ENCODE measurements at regions of chr6 and their contacts with region 1.

Region 1: GRCh38 chr6:32885698-32886286 is 31.8 kb downstream of the PSMB9 start:
- DNase-seq: peak in 1 of 2 donors; percentile 87
- ATAC-seq: peak; percentile 70 to 85 (median 71)
- H3K4me3 ChIP-seq: no peak overlapping the region
- H3K4me3 Mint-ChIP-seq: no peak overlapping the region
- H3K27ac ChIP-seq: no peak overlapping the region
- H3K27ac Mint-ChIP-seq: no peak overlapping the region
- H3K4me1 ChIP-seq: no peaks in the 10 kb centered on the region
- H3K4me1 Mint-ChIP-seq: peaks cover 0 to 5% of the 10 kb centered on the region in 2 donors
- H3K27me3 ChIP-seq: no peaks in the 10 kb centered on the region
- H3K27me3 Mint-ChIP-seq: no peaks in the 10 kb centered on the region
- CTCF ChIP-seq: peak; percentile 73

Region 2: DNA sequence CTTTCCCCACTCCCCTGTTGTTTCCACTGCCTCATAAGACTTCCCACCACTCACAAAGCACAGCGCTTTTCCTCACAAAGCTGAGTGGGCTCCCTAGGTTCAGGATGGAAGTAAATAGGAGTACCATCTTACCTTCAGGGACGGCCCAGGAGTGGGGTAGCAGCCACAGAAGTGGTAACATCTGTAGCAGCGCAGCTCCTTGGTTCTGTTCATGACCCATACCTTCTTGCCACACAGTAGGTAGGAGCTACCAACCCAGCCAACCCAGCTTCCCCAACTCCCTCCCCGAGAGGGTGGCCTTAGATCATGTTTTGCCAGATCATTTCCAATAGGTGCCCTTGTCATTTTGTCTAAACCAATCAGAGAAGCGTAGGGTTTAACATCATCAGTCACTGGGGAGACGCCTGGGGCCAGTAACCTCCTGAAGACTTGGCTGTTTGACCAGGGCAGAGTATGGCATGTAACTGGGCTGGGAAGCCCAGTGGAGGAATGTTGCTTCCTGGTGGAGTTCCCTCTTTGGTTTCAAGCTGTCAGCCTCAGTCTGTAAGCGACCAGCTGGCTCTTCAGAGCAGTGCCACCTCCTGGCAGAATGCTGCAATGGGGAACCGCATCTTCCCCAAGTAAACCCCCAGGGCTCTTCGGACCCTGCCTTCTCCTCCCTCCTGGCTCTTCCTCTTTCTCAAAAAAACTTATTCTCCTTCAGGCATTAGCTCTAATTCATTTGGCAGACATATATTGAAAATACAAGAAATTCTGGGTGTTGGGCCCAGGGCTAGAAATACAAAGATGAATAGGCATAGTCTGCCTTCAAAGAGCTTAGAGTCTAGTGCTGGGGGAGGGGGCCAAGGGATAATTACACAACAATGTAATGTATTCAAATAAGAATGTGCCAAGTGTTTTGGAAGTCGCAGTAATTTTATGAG is 67.3 kb after region 1 on chr6 and contains the start of gene HLA-DMA:
- intact Hi-C with region 1: loop called (anchors 2 kb)
- DNase-seq: peak; percentile 67 to 91
- ATAC-seq: peak; percentile 97 to 99 (median 97)
- H3K4me3 ChIP-seq: peak within 1 kb of the TSS; percentile 50
- H3K4me3 Mint-ChIP-seq: peak within 1 kb of the TSS; percentile 85
- H3K27ac ChIP-seq: peak within 1 kb of the TSS; percentile 77
- H3K27ac Mint-ChIP-seq: peak within 1 kb of the TSS; percentile 87 to 92
- H3K4me1 ChIP-seq: peaks cover 44% of the 10 kb centered on the region
- H3K4me1 Mint-ChIP-seq: peaks cover 31 to 32% of the 10 kb centered on the region in 2 donors
- H3K27me3 ChIP-seq: no peaks in the 10 kb centered on the region
- H3K27me3 Mint-ChIP-seq: no peaks in the 10 kb centered on the region
- CTCF ChIP-seq: peak; percentile 91
- total RNA-seq, gene HLA-DMA: 39.2 to 57.5 (median 48.1) TPM

Region 3: GRCh38 chr6:32984605-32985389 is 99.0 kb after region 1 on chr6:
- intact Hi-C with region 1: loop called (anchors 1 kb)
- DNase-seq: peak; percentile 85 to 95
- ATAC-seq: peak; percentile 82 to 91 (median 91)
- H3K4me3 ChIP-seq: no peak overlapping the region
- H3K4me3 Mint-ChIP-seq: no peak overlapping the region
- H3K27ac ChIP-seq: no peak overlapping the region
- H3K27ac Mint-ChIP-seq: peak overlapping the region in 1 of 2 donors; percentile 97
- H3K4me1 ChIP-seq: peaks cover 7% of the 10 kb centered on the region
- H3K4me1 Mint-ChIP-seq: peaks cover 20 to 32% of the 10 kb centered on the region in 2 donors
- H3K27me3 ChIP-seq: no peaks in the 10 kb centered on the region
- H3K27me3 Mint-ChIP-seq: no peaks in the 10 kb centered on the region
- CTCF ChIP-seq: peak; percentile 87

Region 4: DNA sequence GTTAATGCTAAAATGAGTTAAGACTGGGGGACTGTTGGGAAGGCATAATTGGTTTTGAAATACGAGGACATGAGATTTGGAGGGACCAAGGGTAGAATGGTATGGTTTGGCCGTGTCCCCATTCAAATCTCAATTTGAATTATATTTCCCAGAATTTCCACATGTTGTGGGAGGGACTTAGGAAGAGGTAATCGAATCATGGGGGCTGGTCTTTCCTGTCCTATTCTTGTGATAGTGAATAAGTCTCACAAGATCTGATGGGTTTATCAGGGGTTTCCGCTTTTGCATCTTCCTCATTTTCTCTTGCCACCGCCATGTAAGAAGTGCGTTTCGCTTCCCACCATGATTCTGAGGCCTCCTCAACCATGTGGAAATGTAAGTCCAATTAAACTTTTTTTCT is 581.3 kb after region 1 on chr6:
- intact Hi-C with region 1: no loop called
- DNase-seq: no peak
- ATAC-seq: no peak
- H3K4me3 ChIP-seq: no peak overlapping the region
- H3K4me3 Mint-ChIP-seq: no peak overlapping the region
- H3K27ac ChIP-seq: no peak overlapping the region
- H3K27ac Mint-ChIP-seq: no peak overlapping the region
- H3K4me1 ChIP-seq: no peaks in the 10 kb centered on the region
- H3K4me1 Mint-ChIP-seq: no peaks in the 10 kb centered on the region
- H3K27me3 ChIP-seq: no peaks in the 10 kb centered on the region
- H3K27me3 Mint-ChIP-seq: peaks cover 0 to 11% of the 10 kb centered on the region in 2 donors
- CTCF ChIP-seq: no peak

Measured in natural killer cell (primary cell).